ENCODE measurements at regions of chr4 and their contacts with region 1.

Region 1: DNA sequence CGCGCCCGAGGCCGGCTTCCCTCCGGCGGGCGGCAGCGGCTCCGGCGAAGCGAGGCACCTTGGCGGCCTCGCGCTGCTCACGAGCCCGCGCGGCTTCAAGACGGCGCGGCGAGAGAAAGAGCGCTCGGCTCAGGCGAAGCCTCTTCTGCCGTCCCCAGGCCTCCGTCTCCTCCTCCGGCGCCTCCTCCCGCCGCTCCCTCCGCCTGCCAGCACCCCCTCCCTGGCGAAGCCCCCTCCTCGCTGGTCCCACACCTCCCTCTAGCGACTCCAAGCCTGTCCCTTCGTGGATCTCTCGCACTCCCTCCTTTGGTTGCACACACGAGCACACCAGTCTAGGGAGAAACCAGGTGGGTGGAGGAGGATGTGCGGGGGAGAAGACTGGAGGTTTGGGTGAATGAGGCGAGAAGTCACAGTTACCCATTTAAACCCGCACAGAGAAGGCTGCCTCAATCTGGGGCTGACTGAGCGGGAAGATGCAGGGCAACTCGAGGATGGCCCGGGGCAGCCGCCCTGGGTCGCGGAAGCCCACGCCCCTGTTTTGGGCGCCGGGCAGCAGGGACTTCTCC is at the start of gene CAMK2D:
- DNase-seq: peak; percentile 76
- ATAC-seq: peak; percentile 36
- H3K4me3 Mint-ChIP-seq: peak within 1 kb of the TSS; percentile 99
- H3K27ac Mint-ChIP-seq: peak within 1 kb of the TSS; percentile 100
- H3K4me1 Mint-ChIP-seq: peaks cover 42% of the 10 kb centered on the region
- H3K27me3 Mint-ChIP-seq: no peaks in the 10 kb centered on the region
- CTCF ChIP-seq: no peak
- total RNA-seq, gene CAMK2D: 62.7 and 72.9 TPM in 2 replicates

Region 2: DNA sequence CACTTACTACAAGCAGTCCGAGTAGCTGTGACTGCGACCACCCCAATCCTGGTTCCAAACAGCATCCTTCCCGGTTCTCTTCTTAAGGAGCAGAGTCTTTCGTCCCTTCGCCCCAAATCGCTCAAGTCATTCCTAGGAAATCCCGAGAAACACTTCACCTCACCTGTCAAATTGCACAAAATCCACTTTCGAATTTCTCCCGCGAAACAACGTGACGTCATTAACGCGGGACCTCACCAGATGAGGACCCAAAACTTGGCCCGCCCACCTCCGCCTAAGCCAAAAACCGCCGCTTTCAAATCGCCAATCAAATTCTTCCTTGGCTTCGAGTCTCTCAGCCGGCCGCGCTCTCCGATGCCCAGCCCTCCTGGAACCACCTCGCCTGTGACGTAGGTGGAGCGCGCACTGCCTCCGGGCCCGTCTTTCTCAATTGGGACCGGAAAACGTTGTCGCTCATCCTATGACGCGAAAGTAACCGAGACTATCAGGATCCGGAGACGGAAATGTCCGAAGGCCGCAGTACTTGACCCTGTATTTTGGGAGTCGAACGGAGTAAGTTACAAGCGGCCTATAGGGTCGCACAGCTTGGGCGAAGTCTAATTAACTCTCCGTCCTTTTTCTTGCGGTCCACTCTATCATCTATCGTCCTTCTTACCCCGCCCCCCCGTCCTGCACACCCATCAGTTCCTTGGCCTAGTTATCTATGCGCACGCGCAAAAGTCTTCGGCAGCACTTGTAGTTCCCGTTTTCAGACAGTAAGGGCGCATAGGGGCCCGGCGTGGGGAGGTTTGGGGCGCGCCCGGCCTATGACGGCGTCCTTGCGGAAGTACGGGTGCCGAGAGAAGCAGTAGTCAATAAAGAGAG is 1124.8 kb before region 1 on chr4 and contains the starts of genes LARP7 and ZGRF1:
- CTCF ChIA-PET with region 1: no interaction called
- POLR2A ChIA-PET with region 1: no interaction called
- intact Hi-C with region 1: loop called (anchors 2 kb)
- DNase-seq: peak; percentile 91
- ATAC-seq: peak; percentile 89
- H3K4me3 Mint-ChIP-seq: no peak within 1 kb of the TSS
- H3K27ac Mint-ChIP-seq: no peak within 1 kb of the TSS
- H3K4me1 Mint-ChIP-seq: peaks cover 22% of the 10 kb centered on the region
- H3K27me3 Mint-ChIP-seq: no peaks in the 10 kb centered on the region
- CTCF ChIP-seq: peak; percentile 67
- total RNA-seq, gene LARP7: 56.9 and 57.8 TPM in 2 replicates
- total RNA-seq, gene ZGRF1: 12.3 and 13.7 TPM in 2 replicates

Region 3: GRCh38 chr4:113564493-113564892 is 197.2 kb before region 1 on chr4:
- CTCF ChIA-PET with region 1: no interaction called
- POLR2A ChIA-PET with region 1: interaction called, 32 read pairs
- intact Hi-C with region 1: loop called (anchors 1 kb)
- DNase-seq: no peak
- ATAC-seq: peak; percentile 59
- H3K4me3 Mint-ChIP-seq: peak overlapping the region; percentile 81
- H3K27ac Mint-ChIP-seq: peak overlapping the region; percentile 97
- H3K4me1 Mint-ChIP-seq: peaks cover 87% of the 10 kb centered on the region
- H3K27me3 Mint-ChIP-seq: no peaks in the 10 kb centered on the region
- CTCF ChIP-seq: no peak

Region 4: GRCh38 chr4:113673450-113673849 is 88.3 kb before region 1 on chr4:
- CTCF ChIA-PET with region 1: interaction called, 3 read pairs
- POLR2A ChIA-PET with region 1: interaction called, 10 read pairs
- intact Hi-C with region 1: no loop called
- DNase-seq: peak; percentile 14
- ATAC-seq: peak; percentile 95
- H3K4me3 Mint-ChIP-seq: peak overlapping the region; percentile 41
- H3K27ac Mint-ChIP-seq: peak overlapping the region; percentile 53
- H3K4me1 Mint-ChIP-seq: peaks cover 54% of the 10 kb centered on the region
- H3K27me3 Mint-ChIP-seq: no peaks in the 10 kb centered on the region
- CTCF ChIP-seq: no peak

Region 5: DNA sequence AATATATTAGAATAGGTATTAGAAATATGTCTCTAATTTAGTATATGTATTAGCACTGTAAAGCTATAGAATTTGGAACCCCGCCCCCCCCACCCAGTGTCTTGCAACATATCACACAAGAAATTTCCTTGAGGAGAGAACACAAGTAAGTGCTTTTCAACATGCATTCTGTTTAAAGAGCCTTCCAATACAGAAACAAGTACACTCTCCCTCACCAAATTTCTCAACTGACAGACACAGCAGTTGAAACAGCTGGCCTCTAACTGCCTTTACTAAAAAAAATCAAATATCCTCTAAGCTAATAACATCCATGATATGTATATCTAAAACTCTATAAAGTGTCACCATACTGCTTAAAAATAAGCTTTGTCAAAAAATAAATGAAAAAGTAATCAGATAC is 12.5 kb before region 1 on chr4:
- CTCF ChIA-PET with region 1: no interaction called
- POLR2A ChIA-PET with region 1: no interaction called
- intact Hi-C with region 1: no loop called
- DNase-seq: no peak
- ATAC-seq: no peak
- H3K4me3 Mint-ChIP-seq: no peak overlapping the region
- H3K27ac Mint-ChIP-seq: no peak overlapping the region
- H3K4me1 Mint-ChIP-seq: peaks cover 39% of the 10 kb centered on the region
- H3K27me3 Mint-ChIP-seq: no peaks in the 10 kb centered on the region
- CTCF ChIP-seq: no peak

Region 6: DNA sequence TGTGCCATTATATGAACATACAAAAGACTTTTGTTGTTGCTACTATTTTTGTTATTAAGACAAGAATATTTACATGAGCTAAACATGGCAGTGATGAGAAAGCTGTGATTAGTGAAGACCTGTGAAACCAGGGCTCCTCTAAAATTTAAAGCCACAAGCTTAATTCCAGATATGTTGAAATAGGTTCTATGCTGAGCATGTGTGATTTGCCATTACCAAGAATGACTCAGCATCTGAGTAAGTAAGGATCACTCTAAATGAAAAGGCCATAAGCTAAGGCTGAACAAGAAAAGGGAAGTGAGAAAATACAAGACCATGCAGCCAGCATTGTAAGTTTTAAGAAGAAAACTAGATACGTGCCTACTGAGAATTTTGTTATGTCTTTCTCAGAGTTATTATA is 75.7 kb after region 1 on chr4:
- CTCF ChIA-PET with region 1: no interaction called
- POLR2A ChIA-PET with region 1: interaction called, 3 read pairs
- intact Hi-C with region 1: loop called (anchors 1 kb)
- DNase-seq: no peak
- ATAC-seq: peak; percentile 98
- H3K4me3 Mint-ChIP-seq: no peak overlapping the region
- H3K27ac Mint-ChIP-seq: peak overlapping the region; percentile 64
- H3K4me1 Mint-ChIP-seq: peaks cover 24% of the 10 kb centered on the region
- H3K27me3 Mint-ChIP-seq: no peaks in the 10 kb centered on the region
- CTCF ChIP-seq: no peak

Region 7: DNA sequence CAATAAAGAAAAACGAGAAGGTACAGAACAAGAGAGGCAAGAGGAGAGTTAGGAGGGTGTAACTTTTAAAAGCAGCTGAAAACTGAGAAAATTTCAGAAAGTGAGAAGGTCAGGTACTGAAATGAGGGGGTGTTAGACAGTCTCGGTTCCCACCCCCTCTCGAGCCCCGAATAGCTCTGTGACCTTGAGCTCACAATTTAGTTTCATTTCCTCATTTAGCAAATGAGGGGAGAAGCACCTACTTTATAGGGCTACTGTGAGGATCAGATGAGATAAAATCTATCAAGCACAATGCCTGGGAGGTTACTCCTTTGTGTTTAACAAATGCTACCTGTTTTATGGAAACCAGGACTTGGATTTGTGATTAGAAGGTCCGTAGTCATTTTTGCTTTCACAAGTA is 841.8 kb after region 1 on chr4:
- CTCF ChIA-PET with region 1: no interaction called
- POLR2A ChIA-PET with region 1: interaction called, 4 read pairs
- intact Hi-C with region 1: loop called (anchors 2 kb)
- DNase-seq: peak; percentile 37
- ATAC-seq: peak; percentile 71
- H3K4me3 Mint-ChIP-seq: no peak overlapping the region
- H3K27ac Mint-ChIP-seq: no peak overlapping the region
- H3K4me1 Mint-ChIP-seq: peaks cover 21% of the 10 kb centered on the region
- H3K27me3 Mint-ChIP-seq: no peaks in the 10 kb centered on the region
- CTCF ChIP-seq: no peak

Measured in activated B cell treated with CpG ODN at 0.5 μM for 24 hours (primary cell).